ENCODE measurements at regions of chr1 and their contacts with region 1.

Region 1: GRCh38 chr1:201385299-201385891 is 7.9 kb upstream of the TNNT2 start:
- DNase-seq: peak; percentile 23
- H3K4me3 ChIP-seq: no peak overlapping the region
- H3K27ac ChIP-seq: no peak overlapping the region
- H3K4me1 ChIP-seq: no peaks in the 10 kb centered on the region
- H3K27me3 ChIP-seq: peaks cover 0 to 5% of the 10 kb centered on the region in 2 experiments
- CTCF ChIP-seq: peak; percentile 83 to 92
- POLR2A ChIP-seq: no peak

Region 2: GRCh38 chr1:201206176-201206575 is 179.2 kb before region 1 on chr1:
- CTCF ChIA-PET with region 1: no interaction called
- POLR2A ChIA-PET with region 1: no interaction called
- dilution Hi-C with region 1: no loop called
- intact Hi-C with region 1: no loop called
- DNase-seq: no peak
- H3K4me3 ChIP-seq: no peak overlapping the region
- H3K27ac ChIP-seq: no peak overlapping the region
- H3K4me1 ChIP-seq: no peaks in the 10 kb centered on the region
- H3K27me3 ChIP-seq: peaks cover 2 to 9% of the 10 kb centered on the region in 2 experiments
- CTCF ChIP-seq: no peak
- POLR2A ChIP-seq: no peak

Region 3: DNA sequence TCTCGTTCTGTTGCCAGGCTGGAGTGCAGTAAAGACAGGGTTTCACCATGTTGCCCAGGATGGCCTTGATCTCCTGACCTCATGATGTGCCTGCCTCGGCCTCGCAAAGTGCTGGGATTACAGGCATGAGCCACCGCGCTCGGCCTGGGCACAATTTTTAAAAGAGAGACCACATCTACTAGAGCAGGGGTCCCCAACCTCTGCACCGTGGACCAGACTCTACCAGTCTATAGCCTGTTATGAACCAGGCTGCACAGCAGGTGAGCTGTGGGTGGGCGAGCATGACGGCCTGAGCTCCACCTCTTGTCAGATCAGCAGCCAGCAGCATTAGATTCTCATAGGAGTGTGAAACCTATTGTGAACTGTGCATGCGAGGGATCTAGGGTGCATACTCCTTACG is 28.7 kb before region 1 on chr1:
- CTCF ChIA-PET with region 1: interaction called, 3 read pairs
- POLR2A ChIA-PET with region 1: no interaction called
- dilution Hi-C with region 1: no loop called
- intact Hi-C with region 1: loop called (anchors 1 kb)
- DNase-seq: no peak
- H3K4me3 ChIP-seq: no peak overlapping the region
- H3K27ac ChIP-seq: no peak overlapping the region
- H3K4me1 ChIP-seq: peaks cover 6% of the 10 kb centered on the region
- H3K27me3 ChIP-seq: peaks cover 0 to 2% of the 10 kb centered on the region in 2 experiments
- CTCF ChIP-seq: no peak
- POLR2A ChIP-seq: no peak

Region 4: DNA sequence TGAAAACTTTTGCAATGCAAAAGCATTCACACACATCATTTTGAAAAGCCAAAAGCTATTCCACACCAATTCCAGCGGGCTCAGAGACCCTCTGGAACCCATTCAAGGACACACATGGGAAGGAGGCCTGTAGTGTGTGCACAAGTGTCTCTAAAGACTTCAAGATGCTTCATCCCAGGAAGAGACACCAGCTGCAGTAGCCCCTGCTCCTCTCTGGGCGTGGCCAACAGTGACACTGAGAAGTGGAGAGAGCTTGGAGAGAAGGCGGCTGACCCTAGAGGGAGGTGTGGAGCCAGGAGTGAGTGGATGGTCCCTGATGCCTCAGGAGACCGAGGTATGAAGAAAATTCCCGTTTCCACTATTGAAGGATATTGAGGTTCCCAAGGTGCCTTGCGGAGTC is 51.0 kb after region 1 on chr1:
- CTCF ChIA-PET with region 1: no interaction called
- POLR2A ChIA-PET with region 1: no interaction called
- dilution Hi-C with region 1: no loop called
- intact Hi-C with region 1: no loop called
- DNase-seq: no peak
- H3K4me3 ChIP-seq: no peak overlapping the region
- H3K27ac ChIP-seq: no peak overlapping the region
- H3K4me1 ChIP-seq: no peaks in the 10 kb centered on the region
- H3K27me3 ChIP-seq: peaks cover 12 to 14% of the 10 kb centered on the region in 2 experiments
- CTCF ChIP-seq: no peak
- POLR2A ChIP-seq: no peak

Region 5: DNA sequence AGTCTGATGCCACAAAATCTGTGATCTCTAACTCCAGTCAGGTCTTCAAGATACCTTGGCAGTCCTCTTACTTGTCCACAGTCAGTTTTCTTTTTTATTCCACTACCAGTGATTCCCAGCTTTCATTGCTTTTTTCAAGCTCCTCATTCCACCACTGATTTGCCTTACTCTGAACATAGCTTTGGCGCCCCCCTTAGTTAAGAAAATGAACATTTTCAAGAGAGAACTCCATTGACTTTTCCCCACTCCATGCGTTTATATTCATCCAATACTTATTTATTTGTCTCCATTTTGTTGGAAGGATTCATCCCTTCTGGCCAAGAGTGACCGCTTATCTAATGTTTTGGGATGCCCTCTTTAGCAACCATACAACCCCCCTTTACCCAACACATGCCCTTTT is 409.7 kb after region 1 on chr1:
- CTCF ChIA-PET with region 1: no interaction called
- POLR2A ChIA-PET with region 1: no interaction called
- dilution Hi-C with region 1: no loop called
- intact Hi-C with region 1: no loop called
- DNase-seq: peak; percentile 46
- H3K4me3 ChIP-seq: no peak overlapping the region
- H3K27ac ChIP-seq: no peak overlapping the region
- H3K4me1 ChIP-seq: peaks cover 35% of the 10 kb centered on the region
- H3K27me3 ChIP-seq: no peaks in the 10 kb centered on the region
- CTCF ChIP-seq: peak in 1 of 2 donors; percentile 38
- POLR2A ChIP-seq: no peak

Region 6: GRCh38 chr1:201826830-201827229 is 441.4 kb after region 1 on chr1:
- CTCF ChIA-PET with region 1: no interaction called
- POLR2A ChIA-PET with region 1: no interaction called
- dilution Hi-C with region 1: no loop called
- intact Hi-C with region 1: no loop called
- DNase-seq: no peak
- H3K4me3 ChIP-seq: no peak overlapping the region
- H3K27ac ChIP-seq: no peak overlapping the region
- H3K4me1 ChIP-seq: peaks cover 14% of the 10 kb centered on the region
- H3K27me3 ChIP-seq: no peaks in the 10 kb centered on the region
- CTCF ChIP-seq: no peak
- POLR2A ChIP-seq: no peak

Measured in endothelial cell of umbilical vein (primary cell).